ENCODE measurements at regions of chr5 and their contacts with region 1.

Region 1: GRCh38 chr5:126449751-126450271 is 26.6 kb downstream of the GRAMD2B start:
- DNase-seq: peak; percentile 92
- H3K4me3 Mint-ChIP-seq: peak overlapping the region; percentile 68
- H3K27ac Mint-ChIP-seq: peak overlapping the region; percentile 99
- H3K4me1 Mint-ChIP-seq: peaks cover 62% of the 10 kb centered on the region
- H3K27me3 Mint-ChIP-seq: no peaks in the 10 kb centered on the region
- CTCF ChIP-seq: no peak

Region 2: GRCh38 chr5:126433701-126434100 is 16.1 kb before region 1 on chr5:
- CTCF ChIA-PET with region 1: interaction called, 5 read pairs
- POLR2A ChIA-PET with region 1: interaction called, 14 read pairs
- intact Hi-C with region 1: no loop called
- DNase-seq: no peak
- H3K4me3 Mint-ChIP-seq: peak overlapping the region; percentile 8
- H3K27ac Mint-ChIP-seq: peak overlapping the region; percentile 80
- H3K4me1 Mint-ChIP-seq: peaks cover 40% of the 10 kb centered on the region
- H3K27me3 Mint-ChIP-seq: no peaks in the 10 kb centered on the region
- CTCF ChIP-seq: no peak

Region 3: GRCh38 chr5:126460977-126461376 is 11.2 kb after region 1 on chr5:
- CTCF ChIA-PET with region 1: interaction called, 5 read pairs
- POLR2A ChIA-PET with region 1: interaction called, 5 read pairs
- intact Hi-C with region 1: loop called (anchors 1 kb)
- DNase-seq: no peak
- H3K4me3 Mint-ChIP-seq: no peak overlapping the region
- H3K27ac Mint-ChIP-seq: no peak overlapping the region
- H3K4me1 Mint-ChIP-seq: no peaks in the 10 kb centered on the region
- H3K27me3 Mint-ChIP-seq: no peaks in the 10 kb centered on the region
- CTCF ChIP-seq: no peak

Region 4: GRCh38 chr5:126471875-126472537 is 22.2 kb after region 1 on chr5:
- CTCF ChIA-PET with region 1: interaction called, 4 read pairs
- POLR2A ChIA-PET with region 1: interaction called, 14 read pairs
- intact Hi-C with region 1: no loop called
- DNase-seq: peak; percentile 66
- H3K4me3 Mint-ChIP-seq: no peak overlapping the region
- H3K27ac Mint-ChIP-seq: peak overlapping the region; percentile 92
- H3K4me1 Mint-ChIP-seq: peaks cover 25% of the 10 kb centered on the region
- H3K27me3 Mint-ChIP-seq: no peaks in the 10 kb centered on the region
- CTCF ChIP-seq: no peak